Esophagus squamous epithelium (tissue), 5 donors: ENCODE measurements at regions of chr4 and their contacts with region 1.

Region 1: DNA sequence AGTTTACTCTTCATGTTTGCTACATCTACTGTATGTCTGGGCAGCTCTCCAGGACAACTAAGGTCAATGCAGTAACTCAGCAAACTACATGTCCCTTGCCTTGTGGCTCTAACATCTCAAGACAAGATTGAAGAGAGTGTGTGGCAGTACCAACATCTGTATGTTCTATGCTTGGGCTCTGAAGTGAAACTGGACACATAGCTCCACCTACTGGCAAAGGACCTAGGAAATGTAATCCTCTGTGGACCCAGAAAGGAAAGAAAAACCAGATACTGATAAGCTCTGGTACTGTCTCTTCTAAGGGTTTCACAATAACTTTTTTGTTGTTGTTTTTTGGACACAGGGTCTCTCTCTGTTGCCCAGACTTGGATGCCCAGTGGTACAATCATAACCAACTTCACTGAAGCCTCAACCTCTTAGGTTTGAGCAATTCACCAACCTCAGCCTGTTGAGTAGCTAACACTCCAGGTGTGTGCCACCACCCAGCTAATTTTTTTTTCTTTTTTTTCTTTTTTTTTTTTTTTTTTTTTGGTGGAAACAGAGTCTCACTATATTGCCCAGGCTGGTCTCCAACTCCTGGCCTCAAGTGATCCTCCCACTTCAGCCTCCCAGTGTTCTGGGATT is 64.1 kb downstream of the QDPR start:
- DNase-seq: no peak
- H3K4me3 ChIP-seq: no peak overlapping the region
- H3K27ac ChIP-seq: no peak overlapping the region
- H3K4me1 ChIP-seq: peaks cover 0 to 24% (median 4%) of the 10 kb centered on the region in 3 donors
- H3K27me3 ChIP-seq: no peaks in the 10 kb centered on the region
- CTCF ChIP-seq: peak in 5 of 6 experiments; percentile 46 to 77 (median 64)
- POLR2A ChIP-seq: no peak

Region 2: DNA sequence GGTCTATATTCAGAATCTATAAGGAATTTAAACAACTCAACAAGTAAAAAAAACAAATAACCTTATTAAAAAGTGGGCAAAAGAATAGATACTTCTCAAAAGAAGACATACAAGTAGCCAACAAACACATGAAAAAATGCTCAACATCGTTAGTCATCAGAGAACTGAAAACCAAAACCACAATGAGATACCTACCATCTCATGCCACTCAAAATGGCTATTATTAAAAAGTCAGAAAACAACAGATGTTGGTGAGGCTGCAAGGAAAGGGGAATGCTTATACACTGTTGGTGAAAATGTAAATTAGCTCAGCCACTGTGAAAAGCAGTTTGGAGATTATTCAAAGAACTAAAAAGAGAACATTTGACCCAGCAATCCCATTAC is 137.5 kb before region 1 on chr4:
- intact Hi-C with region 1: no loop called
- DNase-seq: no peak
- H3K4me3 ChIP-seq: no peak overlapping the region
- H3K27ac ChIP-seq: no peak overlapping the region
- H3K4me1 ChIP-seq: no peaks in the 10 kb centered on the region
- H3K27me3 ChIP-seq: no peaks in the 10 kb centered on the region
- CTCF ChIP-seq: no peak
- POLR2A ChIP-seq: no peak

Region 3: GRCh38 chr4:17356926-17357325 is 90.9 kb before region 1 on chr4:
- intact Hi-C with region 1: loop called (anchors 10 kb)
- DNase-seq: no peak
- H3K4me3 ChIP-seq: no peak overlapping the region
- H3K27ac ChIP-seq: no peak overlapping the region
- H3K4me1 ChIP-seq: no peaks in the 10 kb centered on the region
- H3K27me3 ChIP-seq: no peaks in the 10 kb centered on the region
- CTCF ChIP-seq: no peak
- POLR2A ChIP-seq: no peak